HAP-1 (cell line): ENCODE measurements at regions of chr19 and their contacts with region 1.

Region 1: GRCh38 chr19:48835734-48836088 is 580 bp downstream of the HSD17B14 start:
- DNase-seq: peak; percentile 86 to 97
- H3K4me3 ChIP-seq: peak overlapping the region; percentile 11
- H3K4me1 ChIP-seq: peaks cover 5% of the 10 kb centered on the region
- H3K27me3 ChIP-seq: no peaks in the 10 kb centered on the region

Region 2: GRCh38 chr19:48794291-48794966 is 41.3 kb before region 1 on chr19:
- in situ Hi-C with region 1: loop called (anchors 5 kb)
- DNase-seq: no peak
- H3K4me3 ChIP-seq: no peak overlapping the region
- H3K4me1 ChIP-seq: no peaks in the 10 kb centered on the region
- H3K27me3 ChIP-seq: no peaks in the 10 kb centered on the region

Region 3: DNA sequence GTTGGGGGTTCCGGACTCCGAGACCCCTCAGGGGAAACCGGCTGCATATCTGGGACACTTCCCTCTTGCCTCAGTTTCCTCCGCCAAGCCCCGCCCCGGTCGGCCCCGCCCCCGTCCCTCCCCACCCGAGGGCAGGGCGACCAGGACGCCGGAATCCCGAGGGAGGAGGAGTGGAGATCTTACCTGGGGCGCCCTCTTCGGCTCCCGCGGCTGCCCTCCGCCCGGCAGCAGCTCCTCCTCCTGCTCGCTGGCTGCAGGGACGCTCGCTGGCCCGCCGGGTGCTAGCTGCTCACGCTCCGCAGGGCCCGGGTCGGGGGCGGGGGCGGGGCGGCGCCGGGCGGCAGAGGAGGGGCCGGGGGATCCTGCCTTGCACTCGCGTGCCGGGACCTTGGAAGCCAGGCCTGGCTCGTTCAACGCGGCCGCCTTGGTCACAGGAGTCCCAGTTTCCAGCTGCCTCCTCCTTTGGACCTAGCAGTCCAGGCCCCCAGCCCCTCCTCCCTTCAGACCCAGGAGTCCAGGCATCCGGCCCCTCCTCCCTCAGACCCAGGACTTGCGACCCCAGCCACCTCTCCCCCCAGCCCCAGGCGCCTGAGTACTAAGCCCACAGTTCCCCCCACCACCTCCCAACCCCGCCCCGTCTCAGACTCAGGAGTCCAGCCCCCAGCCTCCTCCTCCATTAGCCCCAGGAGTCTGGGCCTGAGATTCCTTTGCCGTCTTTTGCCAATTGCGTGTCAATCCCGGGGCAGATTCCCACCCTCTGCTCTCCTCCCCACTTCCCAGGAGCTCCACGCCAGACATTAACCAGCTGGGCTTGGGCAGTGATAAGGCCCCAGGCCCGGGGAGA is 229.3 kb after region 1 on chr19 and contains the start of gene NTF4:
- in situ Hi-C with region 1: no loop called
- DNase-seq: peak; percentile 24 to 78
- H3K4me3 ChIP-seq: peak within 1 kb of the TSS; percentile 4; the same call in 1 of the 2 replicates
- H3K4me1 ChIP-seq: no peaks in the 10 kb centered on the region; the same call in 1 of the 2 replicates
- H3K27me3 ChIP-seq: 0 out of 2 replicates have a peak, but pooled peaks cover 2% of the 10 kb centered on the region